ENCODE measurements at regions of chr9 and their contacts with region 1.

Region 1: GRCh38 chr9:127244609-127245601 is 19.7 kb upstream of the GARNL3 start:
- DNase-seq: peak; percentile 93
- ATAC-seq: peak; percentile 100
- H3K4me3 ChIP-seq: peak overlapping the region; percentile 50 to 77 (median 66)
- H3K4me3 Mint-ChIP-seq: peak overlapping the region; percentile 94
- H3K27ac ChIP-seq: peak overlapping the region in 1 of 2 donors; percentile 18
- H3K27ac Mint-ChIP-seq: peak overlapping the region; percentile 86
- H3K4me1 ChIP-seq: peaks cover 5 to 11% of the 10 kb centered on the region in 2 donors
- H3K4me1 Mint-ChIP-seq: peaks cover 11% of the 10 kb centered on the region
- H3K27me3 ChIP-seq: peaks cover 0 to 3% (median 0%) of the 10 kb centered on the region in 4 experiments
- H3K27me3 Mint-ChIP-seq: no peaks in the 10 kb centered on the region
- CTCF ChIP-seq: no peak

Region 2: GRCh38 chr9:126914458-126915280 is 330.2 kb before region 1 on chr9 and contains the start of gene RALGPS1:
- CTCF ChIA-PET with region 1: no interaction called
- POLR2A ChIA-PET with region 1: no interaction called
- intact Hi-C with region 1: loop called (anchors 1 kb)
- DNase-seq: peak; percentile 96
- ATAC-seq: peak; percentile 94
- H3K4me3 ChIP-seq: peak within 1 kb of the TSS in 4 of 5 experiments; percentile 33 to 63 (median 44)
- H3K4me3 Mint-ChIP-seq: peak within 1 kb of the TSS; percentile 89
- H3K27ac ChIP-seq: peak within 1 kb of the TSS; percentile 24 to 33
- H3K27ac Mint-ChIP-seq: peak within 1 kb of the TSS; percentile 86
- H3K4me1 ChIP-seq: peaks cover 3 to 13% of the 10 kb centered on the region in 2 donors
- H3K4me1 Mint-ChIP-seq: peaks cover 12% of the 10 kb centered on the region
- H3K27me3 ChIP-seq: peaks cover 0 to 5% (median 0%) of the 10 kb centered on the region in 4 experiments
- H3K27me3 Mint-ChIP-seq: peaks cover 17% of the 10 kb centered on the region
- CTCF ChIP-seq: no peak
- total RNA-seq, gene RALGPS1: 39.9 and 48.6 TPM in 2 replicates

Region 3: DNA sequence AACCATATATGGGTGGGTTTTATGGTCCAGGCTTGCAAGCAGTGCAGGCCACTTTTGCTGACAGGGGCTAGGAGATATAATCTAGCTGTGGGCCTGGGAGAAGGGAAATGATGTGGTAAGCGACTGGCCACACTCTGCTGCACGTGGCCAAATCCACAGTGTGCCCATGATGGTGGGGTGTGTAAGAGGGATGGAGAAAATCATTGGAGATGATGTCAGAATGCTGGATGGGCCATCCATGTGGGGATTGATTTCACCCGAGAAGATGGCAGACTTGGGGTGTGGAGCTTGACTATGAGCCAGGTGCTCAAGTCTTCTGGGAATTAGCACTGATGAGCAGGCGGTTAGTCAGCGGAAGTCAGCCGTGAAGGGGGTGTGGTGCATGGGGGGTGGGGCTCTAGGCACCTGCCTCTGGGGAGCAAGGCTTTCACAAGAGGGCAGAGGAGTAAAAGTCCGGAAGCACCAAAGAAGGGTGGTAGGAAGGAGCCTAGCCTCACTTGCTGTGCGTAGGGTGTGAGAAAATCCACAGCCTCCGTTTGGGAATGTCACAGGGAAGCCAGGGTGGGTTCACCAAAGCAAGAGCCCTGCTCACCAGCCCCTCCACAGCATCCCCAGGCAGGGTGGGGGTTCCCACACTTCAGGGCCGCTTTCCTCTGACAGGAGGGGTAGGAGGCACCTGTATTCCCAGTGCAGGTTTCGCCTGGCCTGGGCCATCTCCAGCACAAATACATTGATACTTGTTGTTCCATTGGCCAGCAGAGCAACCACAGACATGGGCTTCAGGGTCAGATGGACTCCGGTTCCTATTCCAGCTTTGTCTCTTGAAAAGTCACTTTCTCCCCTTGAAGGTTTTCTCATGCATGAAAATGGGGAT is 78.0 kb before region 1 on chr9:
- CTCF ChIA-PET with region 1: no interaction called
- POLR2A ChIA-PET with region 1: no interaction called
- intact Hi-C with region 1: loop called (anchors 1 kb)
- DNase-seq: peak; percentile 92
- ATAC-seq: peak; percentile 96
- H3K4me3 ChIP-seq: peak overlapping the region in 1 of 5 experiments; percentile 15
- H3K4me3 Mint-ChIP-seq: peak overlapping the region; percentile 60
- H3K27ac ChIP-seq: peak overlapping the region; percentile 8 to 59
- H3K27ac Mint-ChIP-seq: peak overlapping the region; percentile 85
- H3K4me1 ChIP-seq: peaks cover 24 to 31% of the 10 kb centered on the region in 2 donors
- H3K4me1 Mint-ChIP-seq: peaks cover 47% of the 10 kb centered on the region
- H3K27me3 ChIP-seq: no peaks in the 10 kb centered on the region
- H3K27me3 Mint-ChIP-seq: no peaks in the 10 kb centered on the region
- CTCF ChIP-seq: no peak

Region 4: GRCh38 chr9:127224178-127224882 is 20.6 kb before region 1 on chr9:
- CTCF ChIA-PET with region 1: interaction called, 21 read pairs
- POLR2A ChIA-PET with region 1: interaction called, 5 read pairs
- intact Hi-C with region 1: loop called (anchors 1 kb)
- DNase-seq: peak; percentile 94
- ATAC-seq: peak; percentile 73
- H3K4me3 ChIP-seq: peak overlapping the region in 4 of 5 experiments; percentile 39 to 75 (median 52)
- H3K4me3 Mint-ChIP-seq: peak overlapping the region; percentile 93
- H3K27ac ChIP-seq: peak overlapping the region in 1 of 2 donors; percentile 39
- H3K27ac Mint-ChIP-seq: peak overlapping the region; percentile 95
- H3K4me1 ChIP-seq: peaks cover 21 to 33% of the 10 kb centered on the region in 2 donors
- H3K4me1 Mint-ChIP-seq: peaks cover 43% of the 10 kb centered on the region
- H3K27me3 ChIP-seq: peaks cover 0 to 9% (median 3%) of the 10 kb centered on the region in 4 experiments
- H3K27me3 Mint-ChIP-seq: peaks cover 4% of the 10 kb centered on the region
- CTCF ChIP-seq: no peak

Region 5: DNA sequence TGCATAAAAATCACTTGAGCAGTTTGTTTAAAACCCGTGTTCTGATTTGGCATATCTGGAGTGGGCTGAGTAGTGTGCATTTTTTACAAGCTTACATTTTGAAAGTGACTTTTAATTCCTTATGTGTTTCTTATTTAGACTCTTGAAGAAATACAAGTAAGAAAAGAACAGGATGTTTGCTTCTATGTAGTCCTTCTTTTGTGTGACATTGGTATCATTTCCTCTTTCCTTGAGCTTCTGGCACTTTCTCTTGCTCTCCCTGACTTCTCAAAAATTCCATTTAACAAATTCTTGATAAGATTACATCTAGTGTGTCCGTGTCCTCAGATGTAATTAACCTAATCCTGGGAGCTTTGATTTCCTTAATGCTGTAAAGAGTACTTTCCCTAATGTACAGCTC is 32.2 kb after region 1 on chr9:
- CTCF ChIA-PET with region 1: no interaction called
- POLR2A ChIA-PET with region 1: no interaction called
- intact Hi-C with region 1: loop called (anchors 1 kb)
- DNase-seq: peak; percentile 52
- ATAC-seq: peak; percentile 54
- H3K4me3 ChIP-seq: peak overlapping the region in 1 of 5 experiments; percentile 17
- H3K4me3 Mint-ChIP-seq: peak overlapping the region; percentile 57
- H3K27ac ChIP-seq: peak overlapping the region; percentile 44 to 46
- H3K27ac Mint-ChIP-seq: peak overlapping the region; percentile 85
- H3K4me1 ChIP-seq: peaks cover 16% of the 10 kb centered on the region in 2 donors
- H3K4me1 Mint-ChIP-seq: peaks cover 29% of the 10 kb centered on the region
- H3K27me3 ChIP-seq: no peaks in the 10 kb centered on the region
- H3K27me3 Mint-ChIP-seq: no peaks in the 10 kb centered on the region
- CTCF ChIP-seq: no peak

Region 6: GRCh38 chr9:127423934-127424675 is 179.2 kb after region 1 on chr9 and contains the start of gene ZNF79:
- CTCF ChIA-PET with region 1: no interaction called
- POLR2A ChIA-PET with region 1: no interaction called
- intact Hi-C with region 1: loop called (anchors 1 kb)
- DNase-seq: peak; percentile 93
- ATAC-seq: peak; percentile 94
- H3K4me3 ChIP-seq: peak within 1 kb of the TSS; percentile 73 to 97 (median 86)
- H3K4me3 Mint-ChIP-seq: peak within 1 kb of the TSS; percentile 99
- H3K27ac ChIP-seq: peak within 1 kb of the TSS; percentile 56 to 79
- H3K27ac Mint-ChIP-seq: peak within 1 kb of the TSS; percentile 95
- H3K4me1 ChIP-seq: peaks cover 19 to 25% of the 10 kb centered on the region in 2 donors
- H3K4me1 Mint-ChIP-seq: peaks cover 36% of the 10 kb centered on the region
- H3K27me3 ChIP-seq: no peaks in the 10 kb centered on the region
- H3K27me3 Mint-ChIP-seq: no peaks in the 10 kb centered on the region
- CTCF ChIP-seq: peak; percentile 9
- total RNA-seq, gene ZNF79: 16.1 and 17.7 TPM in 2 replicates

Measured in B cell (primary cell).